ENCODE measurements at regions of chr15 and their contacts with region 1.

Region 1: DNA sequence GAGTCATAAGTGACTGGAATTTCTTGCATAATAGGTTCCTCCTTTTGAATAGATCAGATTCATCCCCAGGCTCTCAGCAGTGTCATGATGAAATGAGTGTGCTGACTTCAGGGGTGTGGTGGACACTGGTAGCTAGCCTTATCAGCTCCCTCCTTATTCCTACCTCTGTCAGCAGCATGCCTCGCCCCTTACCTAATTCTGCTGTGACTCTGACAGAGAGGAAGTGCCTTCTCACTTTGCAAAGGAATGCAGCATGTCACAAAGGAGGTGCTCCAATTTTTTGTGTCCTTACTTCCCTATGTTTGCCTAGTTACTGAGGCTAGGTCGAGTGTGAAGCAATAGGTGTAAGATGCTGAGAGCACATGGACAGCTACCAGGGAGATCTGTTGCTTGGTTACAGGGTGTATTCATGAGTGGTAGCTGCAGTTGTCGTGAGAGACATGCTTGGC is 90.6 kb downstream of the TNFAIP8L3 start:
- DNase-seq: peak; percentile 71
- H3K4me3 Mint-ChIP-seq: no peak overlapping the region
- H3K27ac Mint-ChIP-seq: peak overlapping the region; percentile 87
- H3K4me1 Mint-ChIP-seq: peaks cover 8% of the 10 kb centered on the region
- H3K27me3 Mint-ChIP-seq: no peaks in the 10 kb centered on the region
- CTCF ChIP-seq: no peak

Region 2: DNA sequence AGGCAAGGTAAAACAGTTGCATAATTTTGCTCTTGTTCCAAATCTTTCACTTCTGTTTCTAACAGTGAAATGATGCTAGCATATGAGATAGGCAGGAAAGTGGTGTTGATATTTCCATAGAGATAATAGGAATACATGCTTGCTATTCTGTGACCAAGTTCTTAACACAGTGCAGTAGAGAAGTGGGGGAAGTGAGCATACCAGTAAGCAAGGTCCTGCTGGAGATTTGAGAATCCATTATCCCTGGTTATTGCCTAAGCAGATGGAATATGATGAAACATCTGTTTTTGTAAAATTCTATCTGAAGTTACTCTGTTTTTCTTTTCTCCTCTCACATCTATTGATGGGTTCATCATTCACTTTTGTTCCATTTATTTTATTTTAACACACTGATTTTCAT is 551.2 kb before region 1 on chr15:
- CTCF ChIA-PET with region 1: no interaction called
- POLR2A ChIA-PET with region 1: no interaction called
- intact Hi-C with region 1: no loop called
- DNase-seq: peak; percentile 0
- H3K4me3 Mint-ChIP-seq: no peak overlapping the region
- H3K27ac Mint-ChIP-seq: no peak overlapping the region
- H3K4me1 Mint-ChIP-seq: no peaks in the 10 kb centered on the region
- H3K27me3 Mint-ChIP-seq: no peaks in the 10 kb centered on the region
- CTCF ChIP-seq: no peak

Region 3: DNA sequence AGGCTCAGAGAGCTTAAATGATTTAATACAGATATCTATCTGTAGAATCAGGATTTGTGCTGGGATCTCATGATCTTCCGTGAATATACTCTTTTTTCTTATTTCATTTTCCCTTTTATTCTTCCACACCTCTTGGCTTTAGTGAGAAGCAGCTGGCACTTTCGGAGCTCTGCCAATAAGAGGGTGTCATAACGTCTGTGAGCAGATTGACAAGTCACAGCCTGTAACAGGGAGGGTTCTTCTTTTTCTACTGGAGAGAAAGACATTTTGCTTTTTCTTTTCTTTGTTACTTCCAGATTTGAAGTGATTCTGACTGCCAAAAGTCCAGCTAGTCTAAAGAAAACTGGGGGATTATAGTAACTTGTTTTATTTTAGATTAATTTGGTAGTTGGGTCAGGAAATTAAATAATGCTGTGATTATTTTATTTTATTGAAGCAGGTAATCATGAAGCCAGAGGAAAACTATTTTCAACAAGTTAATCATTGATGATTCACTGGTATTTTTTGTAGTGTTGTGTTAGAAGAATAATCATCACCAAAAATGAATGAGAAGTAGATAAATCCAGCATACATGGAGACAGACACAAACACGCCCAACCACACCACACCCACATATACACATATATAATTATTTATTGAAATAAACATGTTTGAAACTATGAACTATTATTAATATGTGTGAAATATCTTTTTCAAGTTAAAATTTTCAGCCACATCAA is 20.8 kb after region 1 on chr15:
- CTCF ChIA-PET with region 1: no interaction called
- POLR2A ChIA-PET with region 1: interaction called, 31 read pairs
- intact Hi-C with region 1: no loop called
- DNase-seq: peak; percentile 89
- H3K4me3 Mint-ChIP-seq: peak overlapping the region; percentile 59
- H3K27ac Mint-ChIP-seq: peak overlapping the region; percentile 87
- H3K4me1 Mint-ChIP-seq: peaks cover 12% of the 10 kb centered on the region
- H3K27me3 Mint-ChIP-seq: no peaks in the 10 kb centered on the region
- CTCF ChIP-seq: no peak

Region 4: GRCh38 chr15:51108933-51109550 is 104.9 kb after region 1 on chr15:
- CTCF ChIA-PET with region 1: no interaction called
- POLR2A ChIA-PET with region 1: no interaction called
- intact Hi-C with region 1: no loop called
- DNase-seq: no peak
- H3K4me3 Mint-ChIP-seq: no peak overlapping the region
- H3K27ac Mint-ChIP-seq: peak overlapping the region; percentile 69
- H3K4me1 Mint-ChIP-seq: peaks cover 23% of the 10 kb centered on the region
- H3K27me3 Mint-ChIP-seq: no peaks in the 10 kb centered on the region
- CTCF ChIP-seq: no peak

Region 5: GRCh38 chr15:51121118-51121517 is 117.0 kb after region 1 on chr15:
- CTCF ChIA-PET with region 1: no interaction called
- POLR2A ChIA-PET with region 1: interaction called, 3 read pairs
- intact Hi-C with region 1: loop called (anchors 1 kb)
- DNase-seq: peak; percentile 96
- H3K4me3 Mint-ChIP-seq: no peak overlapping the region
- H3K27ac Mint-ChIP-seq: peak overlapping the region; percentile 63
- H3K4me1 Mint-ChIP-seq: peaks cover 27% of the 10 kb centered on the region
- H3K27me3 Mint-ChIP-seq: no peaks in the 10 kb centered on the region
- CTCF ChIP-seq: no peak